ENCODE measurements at regions of chr2 and their contacts with region 1.

Region 1: GRCh38 chr2:219155054-219155644 is 5.5 kb downstream of the NHEJ1 start:
- DNase-seq: peak; percentile 78
- ATAC-seq: peak; percentile 72
- H3K4me3 ChIP-seq: no peak overlapping the region
- H3K27ac ChIP-seq: no peak overlapping the region
- H3K4me1 ChIP-seq: peaks cover 0 to 6% of the 10 kb centered on the region in 2 experiments; a peak in 2 of 4 replicates
- H3K27me3 ChIP-seq: no peaks in the 10 kb centered on the region
- CTCF ChIP-seq: peak; percentile 25 to 93 (median 53)
- POLR2A ChIP-seq: no peak
- RAD21 ChIP-seq: peak; percentile 94

Region 2: GRCh38 chr2:218979846-218980734 is 175.1 kb before region 1 on chr2:
- CTCF ChIA-PET with region 1: interaction called, 36 read pairs
- POLR2A ChIA-PET with region 1: no interaction called
- RAD21 ChIA-PET with region 1: interaction called, 3 to 5 read pairs
- intact Hi-C with region 1: no loop called
- DNase-seq: peak; percentile 68
- ATAC-seq: peak; percentile 98
- H3K4me3 ChIP-seq: peak overlapping the region; percentile 38 to 54
- H3K27ac ChIP-seq: no peak overlapping the region
- H3K4me1 ChIP-seq: peaks cover 0 to 10% of the 10 kb centered on the region in 2 experiments; a peak in 1 of 4 replicates
- H3K27me3 ChIP-seq: no peaks in the 10 kb centered on the region
- CTCF ChIP-seq: peak; percentile 88 to 99 (median 99)
- POLR2A ChIP-seq: no peak
- RAD21 ChIP-seq: peak; percentile 91

Region 3: DNA sequence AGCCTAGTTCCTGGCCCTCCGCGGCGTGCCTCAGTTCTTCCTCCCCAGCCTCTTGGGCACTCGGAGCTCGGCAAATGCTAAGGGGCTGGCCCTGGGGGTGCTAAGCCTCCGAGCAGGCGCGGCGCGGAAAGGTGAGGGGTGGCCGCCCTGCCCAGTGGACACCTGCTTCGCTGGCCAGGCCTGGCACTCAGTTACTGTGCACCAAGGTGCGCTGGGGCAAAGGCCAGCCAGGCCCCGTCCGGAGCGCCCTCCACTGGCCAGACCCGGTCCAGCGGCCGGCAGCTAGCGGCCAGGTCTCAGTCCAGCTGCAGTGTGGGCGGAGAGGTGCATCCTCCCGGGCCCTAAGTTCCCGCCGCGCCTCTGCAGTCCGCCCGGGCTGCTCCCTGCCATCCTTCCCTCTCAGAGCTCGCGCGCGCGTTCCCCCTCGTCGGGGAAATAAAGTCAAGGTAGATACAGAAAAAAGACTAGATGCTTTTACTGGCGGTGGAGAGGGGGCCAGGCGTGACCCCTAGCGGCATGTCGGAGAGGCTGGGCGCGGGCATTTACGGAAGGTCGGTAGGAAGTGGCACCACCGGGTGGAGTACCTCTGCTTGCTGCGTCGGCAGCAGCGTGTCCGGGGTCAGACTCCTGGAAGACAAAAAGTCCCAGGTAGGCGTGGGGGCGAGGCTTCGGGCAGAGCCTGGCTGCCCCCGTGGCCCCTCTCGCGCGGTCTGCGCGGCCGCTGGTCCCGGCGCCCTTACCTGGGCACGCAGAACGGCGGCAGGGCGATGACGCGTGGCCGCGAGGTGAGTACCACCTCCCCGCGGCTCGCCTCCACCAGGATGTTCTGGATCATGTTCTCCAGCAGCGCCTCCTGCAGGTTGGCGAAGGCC is 152.5 kb before region 1 on chr2:
- CTCF ChIA-PET with region 1: interaction called, 30 read pairs
- POLR2A ChIA-PET with region 1: interaction called, 5 read pairs
- RAD21 ChIA-PET with region 1: no interaction called
- intact Hi-C with region 1: loop called (anchors 2 kb)
- DNase-seq: peak; percentile 60
- ATAC-seq: peak; percentile 83
- H3K4me3 ChIP-seq: peak overlapping the region; percentile 56 to 68
- H3K27ac ChIP-seq: peak overlapping the region; percentile 51
- H3K4me1 ChIP-seq: peaks cover 9 to 35% of the 10 kb centered on the region in 2 experiments; a peak in 3 of 4 replicates
- H3K27me3 ChIP-seq: no peaks in the 10 kb centered on the region
- CTCF ChIP-seq: peak in 2 of 3 experiments; percentile 67 to 71; a peak in 4 of 6 replicates
- POLR2A ChIP-seq: no peak
- RAD21 ChIP-seq: no peak

Region 4: DNA sequence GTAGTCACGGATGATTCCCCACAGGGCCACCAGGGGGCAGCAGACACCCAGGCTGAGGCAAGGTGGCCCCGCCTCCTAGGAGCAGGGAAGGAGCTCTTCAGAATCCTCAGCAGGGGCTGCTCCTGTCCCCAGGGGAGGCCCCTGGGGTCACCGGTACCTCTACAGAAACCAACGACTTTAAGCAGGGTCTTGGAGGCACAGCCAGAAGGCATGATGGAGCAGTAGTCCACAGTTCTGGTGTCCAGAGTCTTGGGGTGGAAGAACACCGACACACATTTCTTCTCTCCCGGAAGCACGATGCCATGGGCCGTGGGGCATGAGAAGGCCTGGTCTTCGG is 125.4 kb before region 1 on chr2:
- CTCF ChIA-PET with region 1: interaction called, 97 read pairs
- POLR2A ChIA-PET with region 1: interaction called, 3 read pairs
- RAD21 ChIA-PET with region 1: interaction called, 17 to 19 read pairs
- intact Hi-C with region 1: loop called (anchors 1 kb)
- DNase-seq: no peak
- ATAC-seq: peak; percentile 97
- H3K4me3 ChIP-seq: no peak overlapping the region
- H3K27ac ChIP-seq: no peak overlapping the region
- H3K4me1 ChIP-seq: no peaks in the 10 kb centered on the region; a peak in 1 of 4 replicates
- H3K27me3 ChIP-seq: peaks cover 18% of the 10 kb centered on the region
- CTCF ChIP-seq: peak; percentile 92 to 97 (median 96)
- POLR2A ChIP-seq: no peak
- RAD21 ChIP-seq: peak; percentile 92

Region 5: GRCh38 chr2:219073413-219074129 is 81.6 kb before region 1 on chr2:
- CTCF ChIA-PET with region 1: interaction called, 64 read pairs
- POLR2A ChIA-PET with region 1: no interaction called
- RAD21 ChIA-PET with region 1: interaction called in 1 of 2 experiments, 9 read pairs
- intact Hi-C with region 1: loop called (anchors 1 kb)
- DNase-seq: peak; percentile 55
- ATAC-seq: peak; percentile 90
- H3K4me3 ChIP-seq: no peak overlapping the region
- H3K27ac ChIP-seq: no peak overlapping the region
- H3K4me1 ChIP-seq: peaks cover 0 to 9% of the 10 kb centered on the region in 2 experiments; a peak in 1 of 4 replicates
- H3K27me3 ChIP-seq: no peaks in the 10 kb centered on the region
- CTCF ChIP-seq: peak; percentile 75 to 83 (median 80)
- POLR2A ChIP-seq: no peak
- RAD21 ChIP-seq: peak; percentile 79

Region 6: DNA sequence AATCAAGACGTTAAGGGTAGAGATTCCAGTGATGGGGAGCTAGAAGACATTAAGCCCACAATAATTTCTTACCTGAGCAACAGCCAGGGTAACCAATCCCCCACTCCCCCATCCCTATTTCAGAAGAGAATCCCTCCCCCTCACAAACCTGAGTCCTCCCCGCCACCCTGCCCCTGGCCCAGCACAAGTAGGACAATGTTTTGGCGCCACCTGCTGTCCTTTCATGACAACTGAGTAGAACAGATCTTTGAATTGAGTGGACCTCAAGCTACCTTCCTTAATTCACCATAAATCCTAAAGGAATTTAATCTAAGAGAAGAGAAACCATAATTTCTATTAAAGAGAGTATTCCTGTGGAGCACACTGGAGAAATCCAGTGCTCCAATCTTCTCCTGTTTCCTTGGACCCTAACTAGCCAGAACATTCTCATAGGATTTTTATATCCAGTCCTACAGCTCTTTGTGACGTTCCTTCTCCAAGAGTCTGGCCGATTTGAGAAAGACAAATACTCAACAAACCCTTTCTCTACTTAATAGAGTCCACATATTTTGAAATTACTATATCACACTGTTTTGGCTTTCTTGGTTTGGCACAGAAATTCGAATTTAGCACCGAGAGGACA is 35.6 kb before region 1 on chr2:
- CTCF ChIA-PET with region 1: interaction called, 26 read pairs
- POLR2A ChIA-PET with region 1: no interaction called
- RAD21 ChIA-PET with region 1: interaction called, 7 to 10 read pairs
- intact Hi-C with region 1: no loop called
- DNase-seq: peak; percentile 27
- ATAC-seq: peak; percentile 93
- H3K4me3 ChIP-seq: no peak overlapping the region
- H3K27ac ChIP-seq: no peak overlapping the region
- H3K4me1 ChIP-seq: peaks cover 7 to 8% of the 10 kb centered on the region in 2 experiments
- H3K27me3 ChIP-seq: no peaks in the 10 kb centered on the region; the same call in 1 of the 2 replicates
- CTCF ChIP-seq: peak; percentile 67 to 93 (median 90)
- POLR2A ChIP-seq: no peak
- RAD21 ChIP-seq: peak; percentile 91

Region 7: DNA sequence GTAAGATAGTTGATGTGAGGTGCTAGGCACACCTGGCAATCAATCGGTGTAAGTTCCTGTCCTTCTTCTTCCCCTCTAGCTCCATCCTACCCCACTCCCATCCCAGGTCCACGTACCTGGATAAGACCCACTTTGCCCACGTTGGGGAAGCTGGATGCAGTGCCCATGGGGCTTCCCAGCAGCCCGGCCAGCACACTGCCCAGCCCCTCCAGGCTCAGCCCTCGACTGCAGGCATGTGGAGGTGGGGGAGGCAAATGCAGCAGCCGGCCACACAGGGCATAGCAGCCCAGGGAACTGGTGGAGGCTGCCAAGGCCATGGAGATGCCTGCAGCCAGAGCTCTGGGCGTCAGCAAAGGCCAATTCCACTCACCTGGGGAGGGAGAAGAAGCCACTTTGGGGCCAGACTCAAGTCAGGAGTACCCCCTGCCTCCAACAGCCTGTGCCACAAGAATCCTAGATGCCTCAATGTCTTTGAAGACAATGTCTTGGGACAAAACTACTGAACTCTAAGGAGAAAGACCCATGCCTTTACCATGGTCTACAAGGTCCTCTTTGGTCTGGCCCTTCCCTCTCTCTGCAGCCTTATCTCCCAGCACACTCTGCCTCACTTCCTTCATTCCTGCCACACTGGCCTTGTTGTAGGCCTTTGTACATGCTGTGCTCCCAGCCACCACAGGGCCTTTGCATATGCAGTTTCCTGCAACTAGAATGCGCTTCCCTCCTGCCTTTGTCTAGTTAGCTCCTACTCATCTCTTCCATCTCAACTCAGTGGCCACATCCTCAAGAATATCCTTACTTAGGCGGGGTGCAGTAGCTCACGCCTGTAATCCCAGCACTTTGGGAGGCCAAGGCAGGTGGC is 10.1 kb after region 1 on chr2:
- CTCF ChIA-PET with region 1: no interaction called
- POLR2A ChIA-PET with region 1: no interaction called
- RAD21 ChIA-PET with region 1: no interaction called
- intact Hi-C with region 1: no loop called
- DNase-seq: no peak
- ATAC-seq: no peak
- H3K4me3 ChIP-seq: no peak overlapping the region
- H3K27ac ChIP-seq: no peak overlapping the region
- H3K4me1 ChIP-seq: peaks cover 5 to 8% of the 10 kb centered on the region in 2 experiments; a peak in 3 of 4 replicates
- H3K27me3 ChIP-seq: no peaks in the 10 kb centered on the region
- CTCF ChIP-seq: no peak
- POLR2A ChIP-seq: no peak
- RAD21 ChIP-seq: no peak

Region 8: DNA sequence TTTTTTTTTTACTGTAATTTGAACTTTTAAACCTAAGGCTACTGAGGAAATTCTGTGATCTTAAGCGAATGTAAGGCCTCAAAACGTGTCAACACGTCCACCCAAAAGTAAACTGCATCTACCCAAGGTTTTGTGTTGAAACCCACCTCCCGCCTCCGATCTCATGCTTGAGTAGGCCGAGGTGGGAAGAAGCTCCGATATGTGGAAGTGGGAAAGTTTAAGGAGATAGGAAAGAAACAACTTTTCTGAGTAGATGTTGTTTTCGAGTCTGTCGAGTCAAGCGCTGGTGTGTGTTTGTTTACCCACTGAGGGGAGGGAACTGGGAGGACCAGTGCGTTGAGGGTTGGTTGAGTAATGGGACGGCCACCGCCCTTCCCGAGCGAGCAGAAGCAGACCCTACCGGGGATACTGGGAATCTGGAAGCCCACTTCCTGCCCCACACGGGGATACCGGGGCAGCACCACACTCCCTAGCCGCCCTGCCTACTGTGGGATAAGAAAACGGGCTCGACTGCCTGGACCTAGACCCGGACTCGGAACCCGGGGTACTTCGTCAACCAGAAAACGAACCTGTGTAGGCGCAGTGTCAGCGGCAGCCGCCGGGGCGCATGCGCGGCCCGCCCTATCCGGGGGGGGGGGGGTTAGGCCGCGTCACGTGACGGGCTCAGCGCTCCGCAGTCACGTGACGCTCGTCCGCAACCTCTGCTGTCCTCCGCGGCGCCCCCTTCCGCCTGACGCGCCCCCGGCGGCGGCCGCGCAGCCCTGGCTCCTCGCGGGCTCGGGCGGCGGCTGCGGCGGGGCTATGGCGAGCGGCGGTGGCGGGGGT is 22.6 kb after region 1 on chr2 and contains the start of gene RETREG2:
- CTCF ChIA-PET with region 1: no interaction called
- POLR2A ChIA-PET with region 1: no interaction called
- RAD21 ChIA-PET with region 1: no interaction called
- intact Hi-C with region 1: no loop called
- DNase-seq: peak; percentile 84
- ATAC-seq: peak; percentile 68
- H3K4me3 ChIP-seq: peak within 1 kb of the TSS; percentile 87 to 93
- H3K27ac ChIP-seq: peak within 1 kb of the TSS; percentile 97
- H3K4me1 ChIP-seq: peaks cover 10 to 27% of the 10 kb centered on the region in 2 experiments
- H3K27me3 ChIP-seq: no peaks in the 10 kb centered on the region
- CTCF ChIP-seq: peak in 1 of 3 experiments; percentile 28; a peak in 1 of 6 replicates
- POLR2A ChIP-seq: peak; percentile 85
- RAD21 ChIP-seq: no peak
- total RNA-seq, gene RETREG2: 63.7 TPM

Measured in HCT116 (cell line).